ENCODE measurements at regions of chr21 and their contacts with region 1.

Region 1: GRCh38 chr21:45439161-45439872 is 34.4 kb downstream of the COL18A1 start:
- DNase-seq: peak; percentile 93
- ATAC-seq: peak; percentile 95

Region 2: GRCh38 chr21:44932408-44933181 is 506.7 kb before region 1 on chr21:
- intact Hi-C with region 1: no loop called
- DNase-seq: peak; percentile 74
- ATAC-seq: peak; percentile 73

Region 3: GRCh38 chr21:45152265-45152746 is 287.0 kb before region 1 on chr21:
- intact Hi-C with region 1: loop called (anchors 10 kb)
- DNase-seq: peak; percentile 59
- ATAC-seq: peak; percentile 57

Region 4: GRCh38 chr21:45209046-45209445 is 230.3 kb before region 1 on chr21:
- intact Hi-C with region 1: no loop called
- DNase-seq: no peak
- ATAC-seq: no peak

Region 5: DNA sequence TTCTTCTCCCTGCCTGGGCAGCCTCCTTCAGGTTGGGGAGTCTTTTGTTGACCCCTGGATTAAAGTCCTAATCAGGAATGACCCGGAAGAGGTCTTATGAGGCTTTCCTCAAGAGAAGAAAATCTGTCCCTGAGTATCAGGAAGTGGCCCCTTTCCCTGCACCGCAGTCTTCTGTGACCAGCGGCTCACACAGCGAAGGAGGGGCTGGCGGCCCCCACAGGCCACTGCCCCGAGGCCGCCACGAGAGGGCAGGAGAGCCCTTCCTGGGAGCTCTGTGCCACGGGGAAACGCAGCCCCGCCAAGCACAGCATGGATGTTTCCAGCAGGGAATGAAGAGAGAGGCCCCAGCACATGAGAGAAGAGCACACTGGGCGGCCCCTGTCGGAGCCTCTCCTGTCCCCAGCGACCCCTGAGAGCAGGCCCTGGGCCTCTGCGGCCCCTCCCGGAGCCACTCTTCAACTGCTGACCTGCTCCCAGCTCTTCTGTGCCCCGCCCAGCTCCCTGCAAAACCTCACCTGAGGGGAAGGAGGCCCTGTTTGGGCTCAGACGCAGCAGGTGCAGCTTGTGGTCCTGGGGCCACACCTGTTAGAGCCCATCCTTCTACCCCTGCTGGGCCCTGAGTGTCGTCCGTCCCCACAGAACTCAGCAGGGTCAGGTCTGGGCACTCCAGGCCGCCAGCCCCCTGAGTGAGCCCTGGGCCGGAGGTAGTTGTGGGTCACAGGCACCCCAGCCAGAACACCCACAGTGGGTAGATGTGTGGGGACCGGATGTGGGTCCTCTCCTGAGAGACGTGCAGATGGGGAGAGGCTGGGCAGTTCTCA is 146.7 kb before region 1 on chr21:
- intact Hi-C with region 1: loop called (anchors 1 kb)
- DNase-seq: peak; percentile 92
- ATAC-seq: peak; percentile 77

Region 6: GRCh38 chr21:45386721-45387371 is 52.5 kb before region 1 on chr21:
- intact Hi-C with region 1: loop called (anchors 5 kb)
- DNase-seq: peak; percentile 72
- ATAC-seq: peak; percentile 66

Measured in Right ventricle myocardium superior (tissue), 1 donor.